Left ventricle myocardium inferior (tissue), 1 donor: ENCODE measurements at regions of chr5 and their contacts with region 1.

Region 1: DNA sequence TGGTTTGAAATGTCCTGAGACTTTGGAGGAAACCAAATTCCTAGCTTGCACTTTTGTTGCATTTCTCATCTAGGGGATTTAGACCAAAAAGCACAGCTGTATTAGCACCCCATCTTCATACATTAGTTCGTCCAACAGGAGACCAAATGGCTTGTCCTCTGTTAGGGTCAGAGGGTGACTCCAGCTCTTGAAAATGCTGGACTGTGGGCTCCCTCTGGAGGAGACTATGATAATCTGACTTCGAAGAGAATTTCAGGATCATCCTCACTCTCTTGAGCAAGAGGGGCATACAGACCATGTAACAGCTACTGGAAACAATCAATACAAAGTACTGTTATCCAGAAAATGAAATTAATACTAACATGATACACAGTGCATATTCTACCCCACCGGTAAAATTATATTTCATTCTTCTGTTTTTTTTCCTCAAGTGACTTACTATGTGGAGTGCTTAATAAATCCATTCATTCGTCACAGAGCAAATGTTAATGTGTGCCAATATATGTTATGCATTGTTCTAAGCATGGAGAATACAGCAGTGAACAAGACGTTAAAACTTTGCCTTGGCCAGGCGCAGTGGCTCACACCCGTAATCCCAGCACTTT is 63.7 kb upstream of the PPP2CA start:
- DNase-seq: no peak
- H3K4me3 ChIP-seq: no peak overlapping the region
- H3K27ac ChIP-seq: no peak overlapping the region
- H3K4me1 ChIP-seq: no peaks in the 10 kb centered on the region
- H3K27me3 ChIP-seq: no peaks in the 10 kb centered on the region
- CTCF ChIP-seq: peak; percentile 84

Region 2: GRCh38 chr5:134184155-134185135 is 105.2 kb before region 1 on chr5:
- intact Hi-C with region 1: loop called (anchors 2 kb)
- DNase-seq: peak; percentile 50
- H3K4me3 ChIP-seq: no peak overlapping the region
- H3K27ac ChIP-seq: no peak overlapping the region
- H3K4me1 ChIP-seq: peaks cover 13% of the 10 kb centered on the region
- H3K27me3 ChIP-seq: no peaks in the 10 kb centered on the region
- CTCF ChIP-seq: peak; percentile 96

Region 3: GRCh38 chr5:134436523-134437339 is 147.1 kb after region 1 on chr5:
- intact Hi-C with region 1: no loop called
- DNase-seq: peak; percentile 62
- H3K4me3 ChIP-seq: peak overlapping the region; percentile 43
- H3K27ac ChIP-seq: peak overlapping the region; percentile 90
- H3K4me1 ChIP-seq: peaks cover 41% of the 10 kb centered on the region
- H3K27me3 ChIP-seq: no peaks in the 10 kb centered on the region
- CTCF ChIP-seq: no peak